ENCODE measurements at regions of chrX and their contacts with region 1.

Region 1: DNA sequence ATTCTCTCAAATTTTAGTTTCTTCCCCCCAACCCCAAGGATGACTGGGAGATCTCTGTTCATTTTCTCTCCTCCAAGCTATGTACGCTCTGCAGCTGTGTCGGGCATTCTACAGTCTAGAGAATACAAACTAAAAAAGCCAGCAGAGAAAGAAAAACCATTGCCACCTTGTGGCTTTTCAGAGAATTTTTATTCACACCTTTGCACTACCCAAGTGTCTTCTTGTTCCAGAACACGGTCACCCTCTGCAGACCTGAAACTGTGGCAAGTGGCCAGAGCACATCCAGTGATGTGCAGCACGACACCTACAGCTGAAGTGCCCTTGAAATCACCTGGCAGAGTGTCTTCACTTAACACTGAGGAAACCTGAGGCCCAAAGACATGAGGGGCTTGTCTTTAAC is 68.6 kb downstream of the CHST7 start:
- DNase-seq: no peak
- ATAC-seq: peak; percentile 65
- H3K4me3 ChIP-seq: no peak overlapping the region
- H3K27ac ChIP-seq: no peak overlapping the region
- H3K4me1 ChIP-seq: no peaks in the 10 kb centered on the region
- H3K27me3 ChIP-seq: no peaks in the 10 kb centered on the region

Region 2: DNA sequence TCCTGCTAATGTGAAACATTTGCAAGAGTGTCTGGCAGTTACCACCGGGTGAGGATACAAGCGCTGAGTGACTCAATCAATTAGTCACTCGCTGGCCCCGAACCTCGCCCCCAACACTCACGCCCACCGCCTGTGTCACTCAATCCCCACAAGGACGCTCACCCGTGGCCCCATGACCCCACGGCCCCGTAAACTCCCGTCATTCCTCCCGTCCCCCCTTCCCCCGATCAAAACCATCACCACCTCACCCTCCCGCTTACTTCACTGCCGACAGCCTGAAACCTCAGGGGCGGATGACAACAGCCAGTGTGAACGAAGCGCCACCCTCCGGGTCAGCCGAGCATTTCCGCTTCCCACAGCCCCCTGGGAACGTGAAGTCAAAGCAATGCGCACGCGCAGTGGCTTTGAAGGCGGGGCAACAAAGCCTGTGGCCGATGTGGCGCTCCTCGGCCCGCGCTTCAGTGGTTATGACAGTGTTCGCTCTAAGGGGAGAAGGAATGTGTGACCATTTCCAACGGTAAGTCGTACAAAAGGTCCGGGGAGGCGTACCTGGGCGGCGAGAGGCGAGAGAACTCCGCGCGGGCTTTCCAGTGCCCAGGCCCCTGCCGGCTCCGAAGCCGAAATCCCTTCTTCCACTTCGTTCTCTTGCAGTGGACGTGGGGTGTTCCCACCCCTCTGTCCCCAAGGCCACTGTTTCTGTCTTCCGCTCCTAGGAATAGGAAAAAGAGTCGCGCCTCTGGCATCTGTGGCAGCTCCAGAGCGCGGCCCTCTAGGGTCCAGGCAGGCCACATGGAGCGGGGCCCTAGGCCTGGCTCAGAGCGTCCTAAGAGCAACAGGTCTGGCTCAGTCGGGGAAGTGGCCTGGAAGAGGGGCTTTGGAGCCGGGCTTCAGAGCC is 96.8 kb before region 1 on chrX and contains the start of gene ZNF674:
- intact Hi-C with region 1: loop called in 1 of 2 experiments (anchors 5 kb)
- DNase-seq: peak; percentile 95 to 97
- ATAC-seq: peak; percentile 94
- H3K4me3 ChIP-seq: peak within 1 kb of the TSS; percentile 59 to 82
- H3K27ac ChIP-seq: peak within 1 kb of the TSS in 1 of 2 donors; percentile 50
- H3K4me1 ChIP-seq: no peaks in the 10 kb centered on the region
- H3K27me3 ChIP-seq: no peaks in the 10 kb centered on the region
- total RNA-seq, gene ZNF674: 5.1 to 7.9 TPM

Region 3: DNA sequence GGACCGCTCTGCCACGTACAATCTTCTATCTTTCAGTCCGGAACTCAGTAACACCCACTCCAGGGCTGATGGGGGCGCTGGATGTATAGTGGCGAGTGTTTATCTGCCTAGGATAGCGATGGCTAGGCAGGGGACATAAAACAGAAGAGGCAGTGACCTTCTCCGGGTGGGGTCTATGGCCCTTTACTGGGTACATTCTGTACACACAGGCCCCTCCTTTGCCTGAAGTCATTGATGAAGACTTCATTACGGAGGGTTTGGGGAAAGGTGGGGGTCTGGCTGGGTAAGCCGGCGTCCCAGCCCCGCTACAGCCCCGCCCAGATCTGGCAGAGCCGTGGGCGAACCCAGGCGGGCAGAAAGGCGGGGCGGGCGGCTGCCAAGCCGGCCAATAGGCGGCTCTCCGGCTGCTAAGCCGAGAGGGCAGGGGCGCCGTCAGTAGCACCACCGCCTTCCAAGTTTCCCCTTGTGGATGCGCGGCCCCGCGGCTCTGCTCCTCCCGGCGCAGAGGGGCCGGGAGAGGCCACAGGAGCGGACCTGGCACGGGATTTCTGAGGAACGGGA is 68.7 kb before region 1 on chrX and contains the start of gene CHST7:
- intact Hi-C with region 1: loop called (anchors 5 to 10 kb)
- DNase-seq: peak; percentile 79 to 87
- ATAC-seq: peak; percentile 83
- H3K4me3 ChIP-seq: peak within 1 kb of the TSS; percentile 1 to 15
- H3K27ac ChIP-seq: peak within 1 kb of the TSS in 1 of 2 donors; percentile 82
- H3K4me1 ChIP-seq: peaks cover 0 to 2% of the 10 kb centered on the region in 2 donors
- H3K27me3 ChIP-seq: no peaks in the 10 kb centered on the region
- total RNA-seq, gene CHST7: 5.2 to 8.5 TPM

Measured in aorta (tissue), 5 donors.